A673 (cell line): ENCODE measurements at regions of chr3 and their contacts with region 1.

Region 1: GRCh38 chr3:195894780-195895607 is 13.4 kb downstream of the TNK2 start:
- DNase-seq: peak; percentile 92
- H3K4me3 ChIP-seq: peak overlapping the region; percentile 76
- H3K27ac ChIP-seq: peak overlapping the region; percentile 70
- H3K4me1 ChIP-seq: peaks cover 29% of the 10 kb centered on the region
- H3K27me3 ChIP-seq: no peaks in the 10 kb centered on the region
- CTCF ChIP-seq: peak; percentile 96

Region 2: DNA sequence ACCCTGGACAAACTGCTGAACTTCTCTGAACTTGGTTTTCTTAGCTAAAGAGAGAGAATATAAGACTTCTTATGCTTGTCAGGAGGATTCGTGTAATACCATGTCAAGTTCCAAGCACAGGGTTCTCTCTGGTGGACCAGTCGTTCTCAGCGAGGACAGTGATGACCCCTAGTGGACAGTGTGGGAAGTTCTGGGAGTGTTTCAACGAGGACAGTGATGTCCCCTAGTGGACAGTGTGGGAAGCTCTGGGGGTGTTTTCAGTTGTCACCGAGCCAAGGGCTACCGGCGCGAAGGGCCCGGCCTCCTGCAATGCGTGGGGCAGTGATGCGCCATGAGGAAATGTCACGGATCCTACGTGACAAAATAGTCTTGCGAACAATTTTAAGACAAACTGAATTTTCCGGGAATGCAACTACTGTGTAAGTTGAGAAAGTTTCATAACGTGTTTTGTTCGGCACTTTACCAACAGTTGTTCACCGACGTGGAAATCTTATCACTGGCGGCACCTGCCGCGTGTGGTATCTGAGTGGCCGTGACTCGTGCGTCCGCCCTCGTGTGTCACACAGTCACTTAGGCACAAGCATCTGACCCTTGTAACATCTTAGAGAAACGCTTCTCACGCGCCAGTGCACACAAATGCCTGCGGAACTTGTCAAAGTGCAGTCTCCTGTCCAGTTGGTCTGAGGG is 44.0 kb before region 1 on chr3:
- CTCF ChIA-PET with region 1: interaction called, 4 read pairs
- POLR2A ChIA-PET with region 1: no interaction called
- intact Hi-C with region 1: loop called (anchors 2 kb)
- DNase-seq: peak; percentile 93
- H3K4me3 ChIP-seq: no peak overlapping the region
- H3K27ac ChIP-seq: no peak overlapping the region
- H3K4me1 ChIP-seq: no peaks in the 10 kb centered on the region
- H3K27me3 ChIP-seq: no peaks in the 10 kb centered on the region
- CTCF ChIP-seq: peak; percentile 100

Region 3: DNA sequence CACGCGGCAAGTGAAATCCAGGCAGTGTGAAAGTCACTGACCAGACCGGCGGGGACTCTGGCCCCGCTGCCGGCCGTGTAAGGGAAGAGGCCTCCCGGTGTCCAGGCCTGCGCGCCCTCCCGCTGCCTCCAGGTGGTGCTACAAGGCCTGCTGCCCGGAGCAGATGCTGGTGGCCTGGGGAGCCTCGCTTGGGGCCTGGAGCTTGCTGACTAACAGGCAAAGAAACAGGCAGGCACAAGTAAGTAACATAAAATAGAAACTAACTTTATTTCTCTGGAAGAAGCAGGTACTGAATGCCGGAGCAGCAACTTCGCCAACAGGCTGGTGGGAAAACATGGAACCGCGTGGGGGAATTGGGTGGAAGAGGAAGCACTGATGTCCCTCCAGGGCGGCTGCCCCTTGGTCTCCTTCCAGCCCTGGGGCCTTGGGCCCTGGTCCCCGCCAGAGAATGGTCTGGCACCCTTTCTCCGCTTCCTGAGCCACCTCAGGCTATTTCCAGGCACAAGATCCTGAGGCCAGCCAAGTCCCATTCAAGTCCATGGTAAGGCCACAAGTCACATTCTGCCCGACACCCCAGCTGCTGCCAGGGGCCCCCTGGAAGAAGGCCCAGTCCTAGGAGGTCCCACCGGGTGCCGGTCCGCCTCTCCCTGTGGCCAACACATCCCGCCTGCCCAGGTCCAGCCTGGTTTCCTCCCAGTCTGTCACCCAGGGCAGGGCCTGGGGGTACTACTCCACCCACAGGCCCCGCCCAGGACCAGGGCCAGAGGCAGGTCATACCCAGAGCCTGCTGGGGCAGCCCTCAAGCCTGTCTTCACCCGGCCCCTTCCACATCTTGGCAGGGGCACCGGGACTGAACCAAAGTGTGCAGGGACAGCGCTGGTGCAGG is 31.6 kb before region 1 on chr3:
- CTCF ChIA-PET with region 1: interaction called, 24 read pairs
- POLR2A ChIA-PET with region 1: no interaction called
- intact Hi-C with region 1: no loop called
- DNase-seq: peak; percentile 66
- H3K4me3 ChIP-seq: no peak overlapping the region
- H3K27ac ChIP-seq: no peak overlapping the region
- H3K4me1 ChIP-seq: no peaks in the 10 kb centered on the region
- H3K27me3 ChIP-seq: no peaks in the 10 kb centered on the region
- CTCF ChIP-seq: peak; percentile 72

Region 4: GRCh38 chr3:196189566-196190347 is 294.8 kb after region 1 on chr3:
- CTCF ChIA-PET with region 1: no interaction called
- POLR2A ChIA-PET with region 1: interaction called, 15 read pairs
- intact Hi-C with region 1: no loop called
- DNase-seq: no peak
- H3K4me3 ChIP-seq: no peak overlapping the region
- H3K27ac ChIP-seq: no peak overlapping the region
- H3K4me1 ChIP-seq: no peaks in the 10 kb centered on the region
- H3K27me3 ChIP-seq: no peaks in the 10 kb centered on the region
- CTCF ChIP-seq: no peak